ENCODE measurements at regions of chr11 and their contacts with region 1.

Region 1: GRCh38 chr11:69683764-69684333 is 8.7 kb upstream of the LTO1 start:
- DNase-seq: no peak
- H3K4me3 ChIP-seq: no peak overlapping the region
- CTCF ChIP-seq: peak; percentile 25

Region 2: GRCh38 chr11:69670158-69670845 is 13.5 kb before region 1 on chr11:
- CTCF ChIA-PET with region 1: interaction called, 13 read pairs
- POLR2A ChIA-PET with region 1: no interaction called
- DNase-seq: peak; percentile 31
- H3K4me3 ChIP-seq: no peak overlapping the region
- CTCF ChIP-seq: peak; percentile 96

Region 3: DNA sequence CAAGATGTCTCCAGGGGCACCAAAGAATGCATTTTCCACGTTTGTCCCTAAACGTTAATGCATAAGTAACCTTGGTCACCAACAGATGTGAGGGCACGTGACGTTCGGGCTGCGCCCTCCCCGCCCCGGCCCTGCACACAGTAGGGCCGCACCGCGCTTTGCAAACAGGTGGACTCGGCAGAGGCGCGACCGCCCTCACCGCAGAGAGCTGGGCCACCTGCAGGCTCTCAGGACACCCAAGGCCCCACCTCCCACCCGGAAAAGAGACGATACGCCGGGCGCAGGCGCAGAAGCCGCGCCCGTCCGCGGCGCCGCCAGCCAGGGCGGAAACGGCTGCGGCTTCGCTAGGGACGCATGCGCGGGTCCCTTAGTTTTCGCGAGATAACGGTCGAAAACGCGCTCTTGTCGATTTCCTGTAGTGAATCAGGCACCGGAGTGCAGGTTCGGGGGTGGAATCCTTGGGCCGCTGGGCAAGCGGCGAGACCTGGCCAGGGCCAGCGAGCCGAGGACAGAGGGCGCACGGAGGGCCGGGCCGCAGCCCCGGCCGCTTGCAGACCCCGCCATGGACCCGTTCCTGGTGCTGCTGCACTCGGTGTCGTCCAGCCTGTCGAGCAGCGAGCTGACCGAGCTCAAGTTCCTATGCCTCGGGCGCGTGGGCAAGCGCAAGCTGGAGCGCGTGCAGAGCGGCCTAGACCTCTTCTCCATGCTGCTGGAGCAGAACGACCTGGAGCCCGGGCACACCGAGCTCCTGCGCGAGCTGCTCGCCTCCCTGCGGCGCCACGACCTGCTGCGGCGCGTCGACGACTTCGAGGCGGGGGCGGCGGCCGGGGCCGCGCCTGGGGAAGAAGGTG is 519.3 kb after region 1 on chr11 and contains the start of gene FADD:
- CTCF ChIA-PET with region 1: interaction called, 10 read pairs
- POLR2A ChIA-PET with region 1: no interaction called
- DNase-seq: peak; percentile 41
- H3K4me3 ChIP-seq: peak within 1 kb of the TSS; percentile 99
- CTCF ChIP-seq: no peak

Measured in AG04449 (cell line).